Activated CD8-positive, alpha-beta T cell treated with anti-CD3 and anti-CD28 coated beads for 36 hours (primary cell): ENCODE measurements at regions of chr14 and their contacts with region 1.

Region 1: GRCh38 chr14:100348784-100349704 is 25.9 kb downstream of the SLC25A47 start:
- DNase-seq: no peak
- ATAC-seq: no peak
- H3K4me3 Mint-ChIP-seq: no peak overlapping the region
- H3K27ac Mint-ChIP-seq: no peak overlapping the region
- H3K4me1 Mint-ChIP-seq: no peaks in the 10 kb centered on the region
- H3K27me3 Mint-ChIP-seq: no peaks in the 10 kb centered on the region
- CTCF ChIP-seq: no peak

Region 2: GRCh38 chr14:100334904-100335303 is 14.1 kb before region 1 on chr14:
- CTCF ChIA-PET with region 1: interaction called, 3 read pairs
- POLR2A ChIA-PET with region 1: interaction called, 11 read pairs
- intact Hi-C with region 1: no loop called
- DNase-seq: no peak
- ATAC-seq: no peak
- H3K4me3 Mint-ChIP-seq: no peak overlapping the region
- H3K27ac Mint-ChIP-seq: no peak overlapping the region
- H3K4me1 Mint-ChIP-seq: peaks cover 6% of the 10 kb centered on the region
- H3K27me3 Mint-ChIP-seq: no peaks in the 10 kb centered on the region
- CTCF ChIP-seq: no peak

Region 3: GRCh38 chr14:100362311-100362927 is 13.4 kb after region 1 on chr14:
- CTCF ChIA-PET with region 1: interaction called, 4 read pairs
- POLR2A ChIA-PET with region 1: interaction called, 52 read pairs
- intact Hi-C with region 1: no loop called
- DNase-seq: no peak
- ATAC-seq: no peak
- H3K4me3 Mint-ChIP-seq: no peak overlapping the region
- H3K27ac Mint-ChIP-seq: peak overlapping the region; percentile 8
- H3K4me1 Mint-ChIP-seq: peaks cover 40% of the 10 kb centered on the region
- H3K27me3 Mint-ChIP-seq: no peaks in the 10 kb centered on the region
- CTCF ChIP-seq: no peak

Region 4: DNA sequence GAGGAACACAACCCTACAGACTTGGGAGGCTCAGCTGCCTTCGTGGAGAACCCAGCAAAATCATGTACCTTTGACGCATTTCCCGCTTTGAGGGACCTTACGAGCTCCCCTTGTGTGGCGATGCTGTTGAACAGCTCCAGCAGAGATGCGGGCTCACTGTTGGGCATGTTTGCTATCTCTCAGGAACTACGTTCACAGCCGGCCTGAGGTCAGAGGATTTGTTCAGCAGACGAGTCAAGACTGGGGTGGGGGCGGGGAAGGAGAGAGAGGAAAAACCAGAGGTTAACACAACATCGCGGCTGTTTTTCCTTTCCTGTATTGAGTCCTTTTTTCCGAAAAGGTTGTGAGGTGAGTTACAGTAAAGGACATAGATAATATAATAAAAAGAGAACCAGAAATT is 20.0 kb after region 1 on chr14:
- CTCF ChIA-PET with region 1: interaction called, 4 read pairs
- POLR2A ChIA-PET with region 1: interaction called, 52 read pairs
- intact Hi-C with region 1: no loop called
- DNase-seq: no peak
- ATAC-seq: no peak
- H3K4me3 Mint-ChIP-seq: no peak overlapping the region
- H3K27ac Mint-ChIP-seq: peak overlapping the region; percentile 4
- H3K4me1 Mint-ChIP-seq: peaks cover 63% of the 10 kb centered on the region
- H3K27me3 Mint-ChIP-seq: no peaks in the 10 kb centered on the region
- CTCF ChIP-seq: no peak

Region 5: GRCh38 chr14:100392356-100392755 is 43.3 kb after region 1 on chr14:
- CTCF ChIA-PET with region 1: no interaction called
- POLR2A ChIA-PET with region 1: no interaction called
- intact Hi-C with region 1: no loop called
- DNase-seq: no peak
- ATAC-seq: no peak
- H3K4me3 Mint-ChIP-seq: no peak overlapping the region
- H3K27ac Mint-ChIP-seq: no peak overlapping the region
- H3K4me1 Mint-ChIP-seq: peaks cover 4% of the 10 kb centered on the region
- H3K27me3 Mint-ChIP-seq: no peaks in the 10 kb centered on the region
- CTCF ChIP-seq: no peak

Region 6: DNA sequence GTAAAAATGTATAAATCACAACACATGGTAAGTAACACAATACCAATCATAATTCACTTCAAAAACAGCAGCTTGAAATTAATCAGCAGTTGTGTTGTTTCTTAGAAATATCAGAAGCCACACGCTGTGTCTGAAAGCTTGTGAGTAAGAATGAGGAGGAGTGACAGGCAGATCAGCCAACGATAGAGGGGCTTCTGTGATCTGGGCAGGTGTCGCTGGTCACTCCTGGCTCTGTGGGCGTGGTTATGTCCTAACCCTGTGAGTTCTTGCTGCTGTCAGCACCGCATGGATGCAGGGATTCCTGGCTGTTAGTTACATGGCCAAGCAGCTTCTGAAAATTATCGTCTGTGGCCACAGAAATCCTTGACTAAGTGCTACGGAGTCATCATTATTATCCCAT is 97.5 kb after region 1 on chr14:
- CTCF ChIA-PET with region 1: no interaction called
- POLR2A ChIA-PET with region 1: no interaction called
- intact Hi-C with region 1: no loop called
- DNase-seq: peak; percentile 52
- ATAC-seq: peak; percentile 80
- H3K4me3 Mint-ChIP-seq: no peak overlapping the region
- H3K27ac Mint-ChIP-seq: no peak overlapping the region
- H3K4me1 Mint-ChIP-seq: peaks cover 12% of the 10 kb centered on the region
- H3K27me3 Mint-ChIP-seq: no peaks in the 10 kb centered on the region
- CTCF ChIP-seq: no peak